HCT116 (cell line): ENCODE measurements at regions of chr3 and their contacts with region 1.

Region 1: DNA sequence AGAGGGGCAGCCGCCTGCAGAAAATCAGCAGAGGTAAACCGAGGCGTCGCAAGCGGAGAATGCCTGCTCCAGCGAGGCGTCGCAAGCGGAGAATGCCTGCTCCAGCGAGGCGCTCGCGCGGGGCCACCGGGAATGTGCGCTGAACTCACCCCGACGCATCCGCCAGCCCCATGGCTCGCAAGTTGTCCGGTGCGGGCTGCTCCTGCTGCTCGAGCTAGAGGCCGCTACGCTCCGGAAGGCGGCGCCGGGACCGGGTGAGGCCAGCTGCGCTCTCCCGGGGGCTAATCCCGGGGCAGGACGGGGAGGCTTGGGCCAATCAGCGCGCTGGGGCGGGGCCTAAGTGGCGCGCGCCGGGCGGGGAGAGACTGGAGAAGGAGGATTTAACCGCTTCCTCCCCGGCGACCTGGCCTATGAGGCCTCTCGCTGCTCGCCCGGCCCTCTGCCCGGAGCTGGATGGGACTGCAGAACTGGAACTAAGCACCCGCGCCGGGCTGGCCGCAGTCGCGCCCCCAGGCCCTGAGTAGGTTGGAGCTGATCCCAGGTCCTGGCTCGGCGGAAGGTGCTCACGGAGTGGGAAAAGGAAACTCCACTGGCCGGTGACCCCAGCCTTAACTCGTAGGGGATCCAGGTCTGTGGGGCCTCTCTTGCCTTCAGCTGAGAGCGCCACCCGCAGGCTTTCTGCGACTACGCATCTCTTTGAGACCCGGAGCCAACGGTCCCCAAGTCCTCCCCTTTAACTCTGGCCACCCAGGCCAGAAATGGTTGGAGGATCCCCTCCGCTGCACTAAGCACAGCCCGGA is at the start of gene SLC26A6:
- DNase-seq: peak; percentile 88
- ATAC-seq: peak; percentile 92
- H3K4me3 ChIP-seq: peak within 1 kb of the TSS; percentile 87 to 94
- H3K27ac ChIP-seq: peak within 1 kb of the TSS; percentile 73
- H3K4me1 ChIP-seq: peaks cover 11 to 22% of the 10 kb centered on the region in 2 experiments
- H3K27me3 ChIP-seq: no peaks in the 10 kb centered on the region
- CTCF ChIP-seq: peak in 2 of 3 experiments; percentile 80 to 82; a peak in 4 of 6 replicates
- POLR2A ChIP-seq: peak; percentile 35
- RAD21 ChIP-seq: no peak
- total RNA-seq, gene SLC26A6: 55.1 TPM

Region 2: DNA sequence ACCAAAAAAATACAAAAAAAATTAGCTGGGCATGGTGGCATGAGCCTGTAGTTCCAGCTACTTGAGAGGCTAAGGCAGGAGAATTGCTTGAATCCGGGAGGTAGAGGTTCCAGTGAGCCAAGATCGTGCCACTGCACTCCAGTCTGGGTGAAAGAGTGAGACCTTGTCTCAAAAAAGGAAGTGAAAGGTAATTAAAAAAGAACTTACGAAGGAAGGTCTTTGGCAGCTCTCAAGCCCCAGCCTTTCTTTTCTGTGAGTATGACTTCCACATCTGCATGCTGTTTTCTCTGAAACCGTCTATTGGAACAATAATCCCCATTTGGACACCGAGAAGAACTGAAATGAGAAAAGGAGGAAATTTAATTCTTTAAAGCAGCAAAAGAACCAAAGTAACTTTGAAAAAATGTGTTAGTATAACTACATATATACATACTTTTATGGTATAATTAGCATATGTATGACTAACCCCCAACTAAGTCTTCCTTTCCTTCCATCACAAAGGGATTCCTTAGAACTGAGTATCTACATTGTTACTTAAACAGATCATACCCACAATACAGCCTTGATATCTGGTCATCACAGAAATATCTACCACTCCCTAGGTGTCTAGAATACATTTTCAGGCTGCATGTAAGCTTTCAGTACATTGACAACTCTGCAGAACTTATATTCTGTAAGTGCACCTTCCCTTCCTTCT is 1521.6 kb before region 1 on chr3:
- CTCF ChIA-PET with region 1: no interaction called
- POLR2A ChIA-PET with region 1: no interaction called
- RAD21 ChIA-PET with region 1: no interaction called
- intact Hi-C with region 1: no loop called
- DNase-seq: no peak
- ATAC-seq: no peak; the same call in 1 of the 2 replicates
- H3K4me3 ChIP-seq: no peak overlapping the region
- H3K27ac ChIP-seq: no peak overlapping the region
- H3K4me1 ChIP-seq: no peaks in the 10 kb centered on the region
- H3K27me3 ChIP-seq: no peaks in the 10 kb centered on the region
- CTCF ChIP-seq: no peak
- POLR2A ChIP-seq: no peak
- RAD21 ChIP-seq: no peak

Region 3: DNA sequence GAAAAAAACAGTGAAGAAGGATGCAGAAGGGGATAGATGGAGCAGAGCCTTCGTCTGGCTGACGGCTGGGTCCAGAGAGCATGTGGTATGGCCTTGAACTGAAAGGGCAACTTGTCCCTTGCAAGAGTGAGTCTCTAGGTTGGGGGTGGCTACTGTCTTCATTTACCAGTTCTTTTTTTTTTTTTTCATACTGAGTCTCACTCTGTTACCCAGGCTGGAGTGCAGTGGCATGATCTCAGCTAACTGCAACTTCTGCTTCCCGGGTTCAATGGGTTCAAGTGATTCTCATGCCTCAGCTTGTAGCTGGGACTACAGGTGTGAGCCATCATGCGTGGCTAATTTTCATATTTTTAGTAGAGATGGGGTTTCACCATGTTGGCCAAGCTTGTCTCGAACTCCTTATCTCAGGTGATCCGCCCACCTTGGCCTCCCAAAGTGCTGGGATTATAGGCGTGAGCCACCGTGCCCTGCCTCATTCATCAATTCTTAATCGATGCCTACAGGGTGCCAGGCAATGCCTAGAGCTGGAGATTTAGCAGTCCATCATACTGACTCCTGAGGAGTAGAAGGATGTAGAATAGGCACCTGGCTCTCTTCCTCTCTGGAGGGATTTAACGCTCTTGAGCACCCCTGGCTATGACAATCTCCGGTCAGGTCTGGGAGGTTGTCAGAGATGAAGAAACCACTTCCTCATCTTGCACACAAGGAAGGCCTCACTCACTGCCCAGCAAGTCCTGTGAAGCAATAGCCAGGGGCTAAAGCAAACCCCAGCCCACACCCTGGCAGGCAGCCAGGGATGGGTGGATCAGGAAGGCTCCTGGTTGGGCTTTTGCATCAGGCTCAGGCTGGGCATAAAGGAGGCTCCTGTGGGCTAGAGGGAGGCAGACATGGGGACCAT is 412.6 kb before region 1 on chr3 and contains the start of gene CAMP:
- CTCF ChIA-PET with region 1: no interaction called
- POLR2A ChIA-PET with region 1: no interaction called
- RAD21 ChIA-PET with region 1: no interaction called
- intact Hi-C with region 1: no loop called
- DNase-seq: no peak
- ATAC-seq: no peak
- H3K4me3 ChIP-seq: no peak within 1 kb of the TSS
- H3K27ac ChIP-seq: no peak within 1 kb of the TSS
- H3K4me1 ChIP-seq: no peaks in the 10 kb centered on the region
- H3K27me3 ChIP-seq: no peaks in the 10 kb centered on the region
- CTCF ChIP-seq: no peak
- POLR2A ChIP-seq: no peak
- RAD21 ChIP-seq: no peak
- total RNA-seq, gene CAMP: not detected

Region 4: DNA sequence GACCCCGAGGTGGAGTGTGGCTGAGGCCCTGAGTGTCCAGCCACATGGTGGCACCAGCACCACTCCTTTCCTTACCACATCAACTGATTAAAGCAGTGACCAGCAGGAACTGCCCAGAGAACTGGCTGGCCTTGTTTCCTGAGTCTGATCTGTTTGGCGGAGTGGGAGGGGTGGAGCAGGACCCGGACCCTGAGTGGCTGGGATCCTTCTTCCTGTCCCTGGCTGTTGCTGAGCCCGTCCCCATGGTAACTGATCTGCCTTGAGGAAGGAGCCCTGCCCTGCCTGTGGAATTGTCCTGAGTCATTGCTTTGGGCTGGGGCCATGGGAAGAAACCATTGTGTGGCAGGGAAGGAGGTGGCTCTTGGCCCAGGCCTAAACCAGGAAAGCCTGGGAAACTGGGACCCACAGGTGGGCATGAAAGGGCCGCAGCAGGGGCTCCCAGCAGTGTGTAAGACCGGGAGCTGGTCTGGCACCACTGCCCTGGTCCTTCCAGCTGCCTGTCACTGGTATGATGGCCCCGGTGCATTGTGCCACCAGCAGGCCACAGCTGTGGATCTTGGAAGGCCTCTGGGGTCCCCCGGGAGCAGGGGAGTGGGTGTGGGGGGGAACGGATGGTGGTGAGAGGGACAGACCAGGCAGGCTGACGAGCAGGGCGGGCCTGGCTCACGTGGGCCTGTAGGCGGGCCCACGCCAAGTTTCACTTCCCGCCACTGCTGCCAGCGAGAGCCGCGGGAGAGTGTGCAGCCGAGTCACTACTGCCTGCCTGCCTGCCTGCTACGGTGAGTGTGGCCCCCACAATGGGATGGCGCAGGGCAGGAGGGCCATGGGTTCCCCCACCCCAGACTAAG is 169.7 kb before region 1 on chr3:
- CTCF ChIA-PET with region 1: no interaction called
- POLR2A ChIA-PET with region 1: no interaction called
- RAD21 ChIA-PET with region 1: no interaction called
- intact Hi-C with region 1: loop called (anchors 2 kb)
- DNase-seq: peak; percentile 96
- ATAC-seq: peak; percentile 85
- H3K4me3 ChIP-seq: peak overlapping the region; percentile 56 to 60
- H3K27ac ChIP-seq: peak overlapping the region; percentile 98
- H3K4me1 ChIP-seq: peaks cover 16 to 33% of the 10 kb centered on the region in 2 experiments
- H3K27me3 ChIP-seq: no peaks in the 10 kb centered on the region
- CTCF ChIP-seq: peak in 2 of 3 experiments; percentile 62 to 64; a peak in 4 of 6 replicates
- POLR2A ChIP-seq: no peak
- RAD21 ChIP-seq: no peak

Region 5: DNA sequence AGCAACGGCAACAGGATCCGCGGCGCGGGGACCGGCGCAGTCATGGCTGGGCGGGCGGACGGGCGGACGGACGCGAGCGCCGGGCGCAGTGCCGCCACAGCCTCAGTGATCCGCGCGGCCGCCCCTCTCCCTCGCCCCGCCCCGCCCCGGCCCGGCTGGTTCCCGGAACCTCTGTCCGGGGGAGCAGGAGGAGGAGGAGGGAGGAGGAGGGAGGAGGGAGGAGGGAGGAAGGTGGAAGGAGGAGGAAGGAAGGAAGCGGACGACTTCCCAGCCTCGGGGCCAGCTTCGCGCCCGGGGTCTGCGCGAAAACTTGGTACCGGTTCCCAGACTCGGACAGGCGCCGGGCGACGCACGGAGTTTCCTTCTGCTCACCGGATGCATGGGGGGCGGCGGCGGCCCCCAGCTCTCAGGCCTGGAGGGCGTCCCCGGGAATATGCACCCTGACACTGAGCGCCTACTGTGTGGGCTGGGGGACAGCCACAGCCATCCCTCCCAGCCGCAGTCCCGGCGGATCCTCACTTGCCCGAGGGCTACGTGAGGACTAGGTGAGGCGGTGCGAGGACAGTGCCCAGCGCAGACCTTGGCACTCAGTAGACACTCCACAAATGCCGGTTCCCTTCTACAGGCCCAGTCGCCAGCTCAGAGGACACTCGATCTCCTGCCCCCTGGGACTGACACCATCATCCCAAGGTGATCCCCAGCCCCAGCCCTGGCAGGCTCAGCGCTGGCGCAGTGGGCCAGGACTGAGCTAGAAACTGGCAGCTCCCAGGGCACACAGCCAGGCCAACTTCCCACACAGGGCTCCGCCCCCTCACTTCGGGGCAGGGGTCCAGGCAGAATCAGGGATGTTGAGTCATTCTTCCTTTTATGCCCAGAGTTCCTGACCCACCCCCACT is 131.1 kb before region 1 on chr3 and contains the start of gene SHISA5:
- CTCF ChIA-PET with region 1: no interaction called
- POLR2A ChIA-PET with region 1: no interaction called
- RAD21 ChIA-PET with region 1: no interaction called
- intact Hi-C with region 1: no loop called
- DNase-seq: no peak
- ATAC-seq: peak; percentile 41
- H3K4me3 ChIP-seq: peak within 1 kb of the TSS; percentile 56 to 72
- H3K27ac ChIP-seq: peak within 1 kb of the TSS; percentile 72; the same call in 1 of the 2 replicates
- H3K4me1 ChIP-seq: peaks cover 54 to 84% of the 10 kb centered on the region in 2 experiments
- H3K27me3 ChIP-seq: no peaks in the 10 kb centered on the region
- CTCF ChIP-seq: no peak
- POLR2A ChIP-seq: no peak
- RAD21 ChIP-seq: no peak
- total RNA-seq, gene SHISA5: 104 TPM

Region 6: GRCh38 chr3:48656061-48656840 is 20.8 kb after region 1 on chr3:
- CTCF ChIA-PET with region 1: interaction called, 3 read pairs
- POLR2A ChIA-PET with region 1: interaction called, 3 read pairs
- RAD21 ChIA-PET with region 1: no interaction called
- intact Hi-C with region 1: loop called (anchors 1 kb)
- DNase-seq: peak; percentile 21
- ATAC-seq: peak; percentile 85
- H3K4me3 ChIP-seq: peak overlapping the region; percentile 17 to 37; a peak in 2 of 4 replicates
- H3K27ac ChIP-seq: peak overlapping the region; percentile 58; the same call in 1 of the 2 replicates
- H3K4me1 ChIP-seq: peaks cover 0 to 8% of the 10 kb centered on the region in 2 experiments; a peak in 3 of 4 replicates
- H3K27me3 ChIP-seq: no peaks in the 10 kb centered on the region
- CTCF ChIP-seq: peak in 2 of 3 experiments; percentile 40 to 50; a peak in 4 of 6 replicates
- POLR2A ChIP-seq: no peak
- RAD21 ChIP-seq: no peak

Region 7: DNA sequence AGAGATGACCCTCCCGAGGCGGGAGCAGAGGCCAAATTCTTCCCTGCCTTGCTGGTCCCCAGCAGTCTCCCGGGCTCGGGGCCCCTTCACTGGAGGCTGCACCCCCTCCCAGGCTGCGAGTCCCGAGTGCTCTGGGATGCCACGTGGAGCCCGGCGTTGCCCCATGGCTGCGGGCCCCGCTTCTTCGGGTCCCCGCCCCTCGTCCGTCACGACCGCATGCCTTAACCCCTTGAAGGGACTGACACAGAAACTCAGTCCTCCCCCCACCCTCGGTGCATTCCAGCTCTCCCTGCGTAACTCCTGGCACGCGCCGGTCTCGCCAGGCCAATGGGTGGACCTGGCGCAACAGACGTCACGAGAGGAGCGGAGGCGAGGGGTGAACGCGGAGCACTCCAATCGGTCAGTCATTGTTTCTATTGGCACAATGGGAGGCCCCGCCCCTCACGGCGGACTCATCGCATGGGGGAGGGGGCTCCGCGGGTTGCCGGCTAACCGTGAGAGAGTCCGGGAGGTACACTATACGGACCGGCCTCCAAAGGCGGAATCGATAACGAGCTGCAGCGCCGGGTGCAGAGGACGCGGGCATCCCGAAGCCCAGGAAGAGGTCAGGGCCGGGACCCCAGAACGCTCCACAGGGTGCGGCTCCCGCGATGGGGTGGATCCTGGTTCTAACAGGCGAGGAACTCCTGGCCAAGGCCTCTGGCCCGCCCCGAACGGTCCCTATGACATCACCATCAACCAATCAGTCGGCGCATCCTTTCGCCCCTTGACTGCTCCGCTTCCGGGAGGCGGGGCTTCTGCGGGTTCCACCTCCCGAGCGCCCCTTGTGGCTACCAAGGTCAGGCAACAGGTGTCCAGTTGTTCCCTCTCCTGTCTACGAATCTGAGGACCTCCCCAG is 28.2 kb after region 1 on chr3:
- CTCF ChIA-PET with region 1: interaction called, 12 read pairs
- POLR2A ChIA-PET with region 1: interaction called, 15 read pairs
- RAD21 ChIA-PET with region 1: interaction called in 1 of 2 experiments, 4 read pairs
- intact Hi-C with region 1: no loop called
- DNase-seq: peak; percentile 98
- ATAC-seq: peak; percentile 90
- H3K4me3 ChIP-seq: peak overlapping the region; percentile 55 to 56
- H3K27ac ChIP-seq: peak overlapping the region; percentile 77
- H3K4me1 ChIP-seq: peaks cover 8 to 20% of the 10 kb centered on the region in 2 experiments
- H3K27me3 ChIP-seq: no peaks in the 10 kb centered on the region
- CTCF ChIP-seq: peak in 2 of 3 experiments; percentile 87 to 92; a peak in 4 of 6 replicates
- POLR2A ChIP-seq: peak; percentile 35
- RAD21 ChIP-seq: no peak

Region 8: DNA sequence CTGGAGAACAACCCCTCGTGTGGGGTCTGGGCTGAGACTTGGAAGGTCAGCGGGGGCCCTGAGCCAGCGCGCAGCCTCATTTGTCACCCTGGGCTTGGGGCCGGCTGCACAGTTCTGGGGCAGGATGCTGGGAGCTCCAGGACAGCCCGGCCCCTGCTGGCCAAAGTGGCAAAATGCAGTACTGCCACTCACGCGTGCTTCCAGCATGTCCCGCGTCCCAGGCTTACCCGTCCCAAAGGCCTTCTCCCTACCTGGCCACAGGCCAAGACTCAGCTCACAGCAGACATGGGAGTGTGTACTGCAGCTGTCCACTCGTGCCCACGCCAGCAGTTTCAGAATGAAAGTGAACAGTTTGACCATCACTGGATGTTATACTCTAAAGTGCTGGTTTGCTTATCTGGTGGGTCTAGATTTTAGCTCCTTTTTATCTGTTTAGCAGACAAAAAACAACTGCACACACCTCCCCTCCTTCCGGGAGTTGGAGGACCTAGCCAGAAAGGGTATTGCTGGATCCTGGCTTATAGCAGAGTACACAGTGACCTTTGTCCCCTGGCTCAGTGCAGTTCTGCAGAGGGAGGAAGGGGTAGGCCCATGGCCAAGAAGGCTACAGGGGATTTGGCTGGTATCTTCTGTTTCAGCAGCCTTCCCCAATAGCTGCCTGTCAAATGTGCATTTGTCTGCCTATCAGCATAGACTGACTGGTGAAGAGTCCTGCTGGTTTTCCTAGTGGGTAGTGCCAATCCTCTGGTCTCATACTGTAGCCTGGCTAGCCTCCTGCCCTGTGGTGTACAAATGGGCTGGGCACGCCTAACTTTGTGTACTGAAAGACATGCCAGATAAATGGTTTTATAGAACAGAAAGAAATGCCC is 104.8 kb after region 1 on chr3:
- CTCF ChIA-PET with region 1: no interaction called
- POLR2A ChIA-PET with region 1: no interaction called
- RAD21 ChIA-PET with region 1: no interaction called
- intact Hi-C with region 1: no loop called
- DNase-seq: peak; percentile 59
- ATAC-seq: peak; percentile 100
- H3K4me3 ChIP-seq: no peak overlapping the region
- H3K27ac ChIP-seq: peak overlapping the region; percentile 26; the same call in 1 of the 2 replicates
- H3K4me1 ChIP-seq: peaks cover 11 to 12% of the 10 kb centered on the region in 2 experiments
- H3K27me3 ChIP-seq: no peaks in the 10 kb centered on the region
- CTCF ChIP-seq: peak; percentile 43 to 89 (median 82); a peak in 5 of 6 replicates
- POLR2A ChIP-seq: no peak
- RAD21 ChIP-seq: peak; percentile 60